ENCODE measurements at regions of chr19 and their contacts with region 1.

Region 1: GRCh38 chr19:55516878-55517620 is 19.9 kb downstream of the SBK2 start:
- DNase-seq: peak; percentile 97 to 100
- ATAC-seq: peak; percentile 90 to 95
- H3K4me3 ChIP-seq: peak overlapping the region; percentile 35
- H3K27ac ChIP-seq: peak overlapping the region; percentile 78 to 88
- H3K4me1 ChIP-seq: peaks cover 21% of the 10 kb centered on the region
- CTCF ChIP-seq: peak; percentile 97
- EP300 ChIP-seq: no peak
- POLR2A ChIP-seq: peak; percentile 27; the same call in 1 of the 2 replicates
- RAD21 ChIP-seq: peak; percentile 100

Region 2: GRCh38 chr19:55536951-55537740 is 20.1 kb after region 1 on chr19 and contains the start of gene SBK2:
- CTCF ChIA-PET with region 1: interaction called, 17 read pairs
- POLR2A ChIA-PET with region 1: no interaction called
- DNase-seq: peak in 1 of 2 experiments; percentile 64
- ATAC-seq: peak in 1 of 2 experiments; percentile 73; a peak in 3 of 6 replicates
- H3K4me3 ChIP-seq: no peak within 1 kb of the TSS
- H3K27ac ChIP-seq: peak within 1 kb of the TSS; percentile 68 to 80
- H3K4me1 ChIP-seq: peaks cover 30% of the 10 kb centered on the region
- CTCF ChIP-seq: peak; percentile 41
- EP300 ChIP-seq: no peak
- POLR2A ChIP-seq: no peak
- RAD21 ChIP-seq: peak; percentile 69 to 72
- polyA plus RNA-seq, gene SBK2: 0.65 and 0.89 TPM in 2 replicates

Region 3: DNA sequence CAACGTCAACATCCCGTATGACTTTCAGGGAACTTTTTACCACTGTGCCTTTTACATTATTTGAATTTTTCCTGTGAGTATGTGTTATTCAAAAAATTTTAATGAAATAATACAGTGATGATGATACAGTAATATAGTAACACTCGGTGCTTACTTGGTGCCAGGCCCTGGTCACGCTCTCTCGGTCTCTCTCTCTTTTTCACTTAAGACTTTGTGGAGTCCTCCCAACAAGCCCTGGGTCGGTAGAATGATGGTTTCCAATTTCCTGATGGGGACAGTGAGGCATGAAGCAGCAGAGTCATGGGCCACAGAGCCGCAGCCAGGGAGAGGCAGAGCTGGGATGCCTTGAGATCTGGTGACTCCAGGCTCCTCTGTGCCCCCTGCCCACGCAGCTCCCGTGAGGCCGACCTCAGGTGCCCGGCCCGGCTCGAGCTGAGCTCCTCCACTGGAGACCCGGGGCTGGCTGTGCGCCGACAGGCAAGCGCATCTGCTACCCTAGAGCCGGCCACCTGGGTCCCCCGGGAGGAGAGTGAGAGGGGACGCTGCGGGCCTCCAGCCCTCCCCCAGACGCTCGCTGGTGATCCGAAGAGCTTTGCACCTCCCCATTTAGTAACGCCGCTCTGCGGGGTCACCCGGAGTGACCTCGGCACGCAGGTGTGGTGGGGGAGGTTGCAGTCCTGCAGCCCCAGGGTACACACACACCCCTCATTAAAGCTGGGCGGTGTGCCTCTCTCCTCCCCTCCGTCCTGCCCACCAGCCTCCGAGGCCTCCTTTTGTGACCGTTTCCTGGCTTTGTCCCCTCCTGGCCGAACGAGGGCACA is 32.7 kb after region 1 on chr19:
- CTCF ChIA-PET with region 1: interaction called, 24 read pairs
- POLR2A ChIA-PET with region 1: interaction called, 4 read pairs
- DNase-seq: peak; percentile 88
- ATAC-seq: peak; percentile 74 to 75
- H3K4me3 ChIP-seq: peak overlapping the region; percentile 38
- H3K27ac ChIP-seq: peak overlapping the region; percentile 97 to 99
- H3K4me1 ChIP-seq: peaks cover 76% of the 10 kb centered on the region
- CTCF ChIP-seq: no peak; the same call in 2 of the 3 replicates
- EP300 ChIP-seq: no peak
- POLR2A ChIP-seq: peak; percentile 33; the same call in 1 of the 2 replicates
- RAD21 ChIP-seq: peak; percentile 41 to 42; a peak in 2 of 5 replicates

Region 4: GRCh38 chr19:55586976-55587668 is 70.1 kb after region 1 on chr19:
- CTCF ChIA-PET with region 1: interaction called, 17 read pairs
- POLR2A ChIA-PET with region 1: interaction called, 4 read pairs
- DNase-seq: peak; percentile 97 to 98
- ATAC-seq: peak; percentile 86 to 88
- H3K4me3 ChIP-seq: peak overlapping the region; percentile 43
- H3K27ac ChIP-seq: peak overlapping the region; percentile 53 to 79
- H3K4me1 ChIP-seq: peaks cover 22% of the 10 kb centered on the region
- CTCF ChIP-seq: no peak
- EP300 ChIP-seq: no peak
- POLR2A ChIP-seq: no peak
- RAD21 ChIP-seq: no peak; a peak in 1 of 5 replicates

Region 5: DNA sequence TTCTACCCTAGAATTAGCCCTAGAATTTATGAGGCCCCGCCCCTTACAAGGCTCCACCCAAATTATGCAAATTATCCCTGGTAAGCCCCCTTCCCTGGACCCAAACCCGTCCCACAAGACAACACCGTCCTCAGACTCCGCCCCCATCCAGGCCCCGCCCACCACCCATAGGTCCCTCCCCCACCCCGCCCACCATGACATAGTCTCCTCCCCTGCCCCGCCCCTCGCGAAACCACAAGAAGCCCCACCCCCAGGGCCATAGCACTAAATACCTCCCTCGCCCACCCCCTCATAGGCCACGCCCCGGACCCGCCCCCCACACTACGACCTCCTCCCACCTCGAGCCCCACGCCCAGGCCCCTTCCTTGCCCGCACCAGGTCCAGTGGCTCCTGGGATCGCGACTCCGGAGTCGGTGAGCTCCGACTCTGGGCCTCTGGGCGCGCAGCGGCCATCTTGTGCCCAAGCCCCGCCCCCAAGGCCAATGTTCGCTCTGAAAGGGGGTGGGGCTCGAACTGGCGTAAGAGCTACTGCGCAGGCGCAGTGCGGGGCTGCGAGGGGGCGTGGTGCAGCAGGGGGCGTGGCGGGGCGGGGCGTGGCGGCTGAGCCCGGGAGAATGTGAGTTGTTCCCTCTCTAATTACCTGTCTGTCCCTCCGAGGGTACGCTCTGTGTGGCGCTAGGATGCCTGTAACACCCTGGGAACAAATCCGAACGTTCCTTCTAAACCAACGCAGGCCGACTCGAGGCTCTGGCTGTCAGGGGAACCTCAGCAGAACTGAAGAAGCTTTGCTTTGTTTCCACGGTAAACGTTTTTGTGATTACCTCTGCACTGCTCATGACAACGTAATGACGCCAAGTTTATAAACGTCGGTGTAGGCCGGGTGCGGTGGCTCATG is 107.3 kb after region 1 on chr19 and contains the start of gene ZNF784:
- CTCF ChIA-PET with region 1: interaction called, 363 read pairs
- POLR2A ChIA-PET with region 1: interaction called, 4 read pairs
- DNase-seq: peak; percentile 89 to 96
- ATAC-seq: peak; percentile 74 to 82
- H3K4me3 ChIP-seq: peak within 1 kb of the TSS; percentile 48
- H3K27ac ChIP-seq: peak within 1 kb of the TSS; percentile 89 to 93
- H3K4me1 ChIP-seq: 0 out of 3 replicates have a peak, but pooled peaks cover 7% of the 10 kb centered on the region
- CTCF ChIP-seq: no peak
- EP300 ChIP-seq: no peak
- POLR2A ChIP-seq: peak; percentile 80
- RAD21 ChIP-seq: no peak
- polyA plus RNA-seq, gene ZNF784: 3.5 and 4.1 TPM in 2 replicates

Region 6: GRCh38 chr19:55674841-55675660 is 158.0 kb after region 1 on chr19 and contains the start of gene EPN1:
- CTCF ChIA-PET with region 1: no interaction called
- POLR2A ChIA-PET with region 1: no interaction called
- DNase-seq: peak; percentile 98 to 99
- ATAC-seq: peak; percentile 83 to 85
- H3K4me3 ChIP-seq: peak within 1 kb of the TSS; percentile 93
- H3K27ac ChIP-seq: peak within 1 kb of the TSS; percentile 94 to 96
- H3K4me1 ChIP-seq: peaks cover 54% of the 10 kb centered on the region
- CTCF ChIP-seq: no peak
- EP300 ChIP-seq: no peak
- POLR2A ChIP-seq: no peak; the same call in none of the 2 replicates
- RAD21 ChIP-seq: no peak
- polyA plus RNA-seq, gene EPN1: 28.0 and 43.7 TPM in 2 replicates

Measured in A549 (cell line).